ENCODE measurements at regions of chr14 and their contacts with region 1.

Region 1: DNA sequence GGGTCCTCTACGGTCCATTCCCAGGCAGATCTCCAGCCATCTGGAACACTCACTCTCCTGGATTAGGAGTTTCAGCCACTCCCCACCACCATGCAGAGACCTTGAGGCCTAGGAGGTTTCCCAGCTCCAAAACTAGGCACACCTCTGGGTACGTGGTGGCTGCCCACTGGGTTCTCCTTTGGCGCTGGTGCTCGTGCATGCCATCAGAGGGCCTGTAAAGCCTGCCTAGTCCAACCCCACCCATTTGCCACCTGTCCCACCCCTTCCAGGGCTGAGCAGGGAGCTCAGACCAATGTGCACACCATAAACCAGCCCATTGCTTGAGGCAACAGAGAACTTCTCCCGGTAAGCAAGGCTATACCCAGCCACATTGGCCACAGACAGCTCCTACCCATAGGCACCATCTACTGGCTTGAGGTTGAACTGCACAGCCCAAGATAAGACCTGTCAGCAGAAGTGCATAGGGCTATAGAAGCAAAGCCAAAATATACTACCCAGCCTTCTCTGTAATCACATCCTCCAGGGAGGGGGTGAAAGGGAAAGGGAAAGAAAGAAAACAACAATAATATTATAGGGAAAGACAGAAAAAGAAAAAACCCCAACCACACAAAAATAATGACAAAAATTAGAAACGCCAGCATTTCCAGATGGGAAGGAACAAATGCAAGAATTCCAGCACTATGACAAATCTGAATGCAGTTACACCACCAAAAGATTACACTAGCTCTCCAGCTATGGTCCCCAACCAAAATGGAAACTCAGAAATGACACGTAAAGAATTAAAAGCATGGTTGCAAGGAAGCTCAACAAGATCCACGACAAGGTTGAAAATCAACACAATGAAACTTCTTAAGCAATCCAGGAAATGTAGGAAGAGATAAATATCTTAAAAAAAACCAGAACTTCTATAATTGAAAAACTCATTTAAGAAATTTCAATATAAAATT is 111.9 kb upstream of the CCDC175 start:
- DNase-seq: peak; percentile 34
- CTCF ChIP-seq: peak; percentile 69

Region 2: DNA sequence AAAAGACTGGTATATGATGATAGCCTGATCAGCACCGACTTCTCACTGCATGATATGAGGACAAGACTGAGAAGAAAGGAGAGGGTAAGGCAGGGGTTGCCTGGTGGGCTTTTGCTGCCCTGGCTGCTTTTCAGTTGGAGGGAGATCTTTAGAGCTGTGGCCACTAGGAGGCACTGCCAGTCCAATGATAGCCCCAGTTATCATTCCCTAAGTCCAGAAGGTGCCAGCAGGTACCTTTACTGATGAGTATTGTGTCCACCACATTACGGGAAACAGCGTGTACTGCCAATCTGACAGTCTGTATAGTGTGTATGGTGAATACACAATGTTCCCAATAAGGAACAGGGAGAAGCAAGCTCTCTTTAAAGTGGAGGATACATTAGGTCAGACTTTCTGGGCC is 56.1 kb before region 1 on chr14:
- CTCF ChIA-PET with region 1: interaction called, 15 read pairs
- POLR2A ChIA-PET with region 1: no interaction called
- DNase-seq: peak; percentile 48
- CTCF ChIP-seq: peak; percentile 37

Region 3: GRCh38 chr14:59675394-59675793 is 13.1 kb before region 1 on chr14:
- CTCF ChIA-PET with region 1: interaction called, 20 read pairs
- POLR2A ChIA-PET with region 1: no interaction called
- DNase-seq: no peak
- CTCF ChIP-seq: no peak

Measured in GM10248 (cell line).